Right cardiac atrium (tissue), 5 donors: ENCODE measurements at regions of chr9 and their contacts with region 1.

Region 1: DNA sequence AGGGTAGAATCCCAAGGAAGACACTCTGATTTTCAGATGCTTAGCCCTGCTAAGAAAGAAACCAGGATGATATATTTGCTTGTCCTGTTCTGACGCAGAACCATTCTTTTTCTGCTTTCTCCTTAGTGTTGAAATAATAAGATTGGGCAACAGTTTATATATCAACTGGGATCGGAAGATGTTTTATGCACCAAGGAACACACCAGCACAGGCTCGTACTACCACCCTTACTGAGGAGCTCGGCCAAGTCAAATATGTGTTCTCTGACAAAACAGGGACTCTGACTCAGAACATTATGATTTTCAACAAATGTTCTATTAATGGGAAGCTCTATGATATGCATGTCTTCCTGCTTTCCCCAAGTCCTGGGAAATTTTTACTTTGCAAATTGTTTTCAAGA is 19.0 kb upstream of the RUSC2 start:
- DNase-seq: no peak
- ATAC-seq: peak in 1 of 2 donors; percentile 37
- H3K4me3 ChIP-seq: no peak overlapping the region
- H3K27ac ChIP-seq: no peak overlapping the region
- H3K4me1 ChIP-seq: no peaks in the 10 kb centered on the region
- H3K27me3 ChIP-seq: no peaks in the 10 kb centered on the region

Region 2: DNA sequence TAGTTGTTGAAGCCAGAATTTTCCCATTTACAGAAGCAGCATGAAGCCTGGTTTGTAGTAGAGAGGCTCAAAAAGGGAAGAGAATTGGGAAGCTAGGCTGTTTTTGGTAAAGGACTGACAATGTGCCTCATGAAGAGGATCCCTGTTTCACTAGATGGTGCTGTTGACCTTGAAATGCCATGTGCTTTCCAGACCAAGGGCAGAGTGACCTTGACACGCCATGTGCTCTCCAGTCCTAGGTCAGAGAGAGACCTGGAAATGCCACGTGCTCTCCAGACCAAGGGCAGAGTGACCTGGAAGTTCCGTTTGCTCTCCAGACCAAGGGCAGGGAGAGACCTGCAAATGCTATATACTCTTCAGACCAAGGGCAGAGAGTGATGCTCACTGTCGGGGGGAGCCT is 277.1 kb before region 1 on chr9:
- intact Hi-C with region 1: loop called in 1 of 4 experiments (anchors 10 kb)
- DNase-seq: no peak
- ATAC-seq: no peak
- H3K4me3 ChIP-seq: no peak overlapping the region
- H3K27ac ChIP-seq: no peak overlapping the region
- H3K4me1 ChIP-seq: no peaks in the 10 kb centered on the region
- H3K27me3 ChIP-seq: no peaks in the 10 kb centered on the region

Region 3: DNA sequence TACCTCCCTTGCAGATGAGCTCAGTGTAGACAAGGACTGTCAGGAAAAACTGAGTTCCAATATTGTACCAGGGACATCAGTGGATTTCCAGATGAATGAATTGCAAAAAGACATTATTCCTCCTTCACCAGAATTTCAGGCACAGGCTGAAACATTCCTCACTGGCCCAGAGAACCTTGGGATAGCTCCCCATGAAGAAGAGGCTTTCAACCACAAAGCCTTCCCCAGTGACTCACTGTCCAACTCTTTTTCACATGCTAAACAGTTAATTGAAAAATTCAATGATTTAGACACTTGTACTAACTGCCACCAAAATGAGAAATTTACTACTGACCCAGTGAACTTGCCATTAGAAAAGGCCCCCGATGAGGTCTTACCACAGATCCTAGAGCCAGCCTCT is 164.6 kb before region 1 on chr9:
- intact Hi-C with region 1: loop called in 2 of 4 experiments (anchors 5 to 10 kb)
- DNase-seq: no peak
- ATAC-seq: no peak
- H3K4me3 ChIP-seq: no peak overlapping the region
- H3K27ac ChIP-seq: no peak overlapping the region
- H3K4me1 ChIP-seq: peaks cover 1% of the 10 kb centered on the region
- H3K27me3 ChIP-seq: no peaks in the 10 kb centered on the region